ENCODE measurements at regions of chr11 and their contacts with region 1.

Region 1: GRCh38 chr11:116276051-116277044 is 496.4 kb downstream of the BUD13 start:
- DNase-seq: peak; percentile 72
- H3K4me3 ChIP-seq: peak overlapping the region; percentile 50
- H3K27ac ChIP-seq: no peak overlapping the region
- H3K4me1 ChIP-seq: peaks cover 7% of the 10 kb centered on the region
- H3K27me3 ChIP-seq: peaks cover 42% of the 10 kb centered on the region
- CTCF ChIP-seq: peak; percentile 99

Region 2: DNA sequence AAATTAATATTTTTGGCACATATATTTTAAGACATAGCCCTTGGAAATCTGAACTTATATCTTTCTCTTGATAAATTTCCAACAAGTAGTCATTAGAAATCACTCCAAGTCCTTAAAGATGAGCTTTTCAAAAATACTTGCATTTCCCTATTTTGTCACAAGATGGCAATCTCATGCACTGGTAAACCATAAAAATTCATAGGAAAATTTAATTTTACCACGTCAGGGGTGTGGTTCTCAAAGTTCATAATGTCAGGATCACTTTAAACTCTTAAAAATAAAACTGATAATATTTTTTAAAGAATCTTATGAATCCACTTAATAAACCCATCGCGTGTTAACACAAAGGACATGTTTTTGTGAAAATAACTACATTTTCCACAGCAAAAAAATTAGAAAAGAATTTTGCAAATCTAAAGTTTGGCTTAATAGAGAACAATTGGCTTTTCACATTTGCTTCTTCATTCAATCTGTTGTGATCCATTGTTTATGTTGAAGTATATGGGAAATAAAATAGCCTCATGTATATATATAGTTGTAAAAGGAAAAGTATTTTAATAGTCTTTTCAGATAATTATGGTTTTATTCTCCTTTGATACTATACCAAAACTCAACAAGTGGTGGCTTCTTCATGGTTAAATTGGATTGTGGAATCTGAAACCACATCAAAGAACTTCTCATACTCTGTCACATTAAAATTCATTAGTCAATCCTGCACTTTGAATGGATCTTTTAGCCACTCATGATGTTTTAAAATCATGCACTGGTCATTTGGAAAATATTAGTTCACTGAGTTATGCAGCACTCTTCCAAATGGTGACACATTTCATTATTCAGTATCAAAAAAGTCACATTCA is 941.2 kb before region 1 on chr11:
- intact Hi-C with region 1: loop called (anchors 5 kb)
- DNase-seq: no peak
- H3K4me3 ChIP-seq: no peak overlapping the region
- H3K27ac ChIP-seq: no peak overlapping the region
- H3K4me1 ChIP-seq: peaks cover 8% of the 10 kb centered on the region
- H3K27me3 ChIP-seq: no peaks in the 10 kb centered on the region
- CTCF ChIP-seq: peak; percentile 77

Region 3: GRCh38 chr11:116387641-116388040 is 111.3 kb after region 1 on chr11:
- intact Hi-C with region 1: no loop called
- DNase-seq: no peak
- H3K4me3 ChIP-seq: no peak overlapping the region
- H3K27ac ChIP-seq: no peak overlapping the region
- H3K4me1 ChIP-seq: no peaks in the 10 kb centered on the region
- H3K27me3 ChIP-seq: peaks cover 21% of the 10 kb centered on the region
- CTCF ChIP-seq: no peak

Measured in left ventricle myocardium inferior (tissue), 1 donor.